B cell (primary cell): ENCODE measurements at regions of chr7 and their contacts with region 1.

Region 1: GRCh38 chr7:47669061-47669891 is 87.4 kb upstream of the TNS3 start:
- DNase-seq: peak; percentile 92
- ATAC-seq: peak; percentile 71
- H3K4me3 ChIP-seq: peak overlapping the region in 3 of 5 experiments; percentile 7 to 23 (median 21)
- H3K4me3 Mint-ChIP-seq: peak overlapping the region; percentile 74
- H3K27ac ChIP-seq: peak overlapping the region; percentile 88 to 90
- H3K27ac Mint-ChIP-seq: peak overlapping the region; percentile 98
- H3K4me1 ChIP-seq: peaks cover 50 to 69% of the 10 kb centered on the region in 2 donors
- H3K4me1 Mint-ChIP-seq: peaks cover 57% of the 10 kb centered on the region
- H3K27me3 ChIP-seq: no peaks in the 10 kb centered on the region
- H3K27me3 Mint-ChIP-seq: no peaks in the 10 kb centered on the region
- CTCF ChIP-seq: no peak

Region 2: DNA sequence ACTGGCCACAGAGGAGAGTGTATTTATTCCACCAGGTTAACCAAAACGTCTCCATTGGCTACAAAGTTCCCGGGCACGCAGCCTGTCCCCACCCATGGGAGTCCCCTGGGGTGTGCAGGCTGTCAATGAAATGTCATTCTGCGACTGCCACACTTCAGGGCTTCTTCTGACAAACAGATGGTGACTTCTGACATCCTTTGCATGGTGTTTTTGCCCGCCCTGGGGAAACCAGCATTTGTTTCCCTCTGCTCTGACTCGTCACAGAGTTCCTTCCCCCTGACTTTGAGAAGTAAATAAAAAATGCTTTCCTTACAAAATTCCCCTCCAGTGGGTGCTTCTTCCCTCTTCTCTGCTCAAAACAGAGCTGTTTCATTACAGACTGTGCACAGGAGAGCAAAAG is 125.6 kb before region 1 on chr7:
- CTCF ChIA-PET with region 1: no interaction called
- POLR2A ChIA-PET with region 1: no interaction called
- intact Hi-C with region 1: loop called (anchors 1 kb)
- DNase-seq: peak; percentile 64
- ATAC-seq: peak; percentile 91
- H3K4me3 ChIP-seq: peak overlapping the region in 1 of 5 experiments; percentile 14
- H3K4me3 Mint-ChIP-seq: peak overlapping the region; percentile 67
- H3K27ac ChIP-seq: peak overlapping the region; percentile 34 to 38
- H3K27ac Mint-ChIP-seq: peak overlapping the region; percentile 88
- H3K4me1 ChIP-seq: peaks cover 18 to 23% of the 10 kb centered on the region in 2 donors
- H3K4me1 Mint-ChIP-seq: peaks cover 54% of the 10 kb centered on the region
- H3K27me3 ChIP-seq: no peaks in the 10 kb centered on the region
- H3K27me3 Mint-ChIP-seq: peaks cover 2% of the 10 kb centered on the region
- CTCF ChIP-seq: no peak

Region 3: DNA sequence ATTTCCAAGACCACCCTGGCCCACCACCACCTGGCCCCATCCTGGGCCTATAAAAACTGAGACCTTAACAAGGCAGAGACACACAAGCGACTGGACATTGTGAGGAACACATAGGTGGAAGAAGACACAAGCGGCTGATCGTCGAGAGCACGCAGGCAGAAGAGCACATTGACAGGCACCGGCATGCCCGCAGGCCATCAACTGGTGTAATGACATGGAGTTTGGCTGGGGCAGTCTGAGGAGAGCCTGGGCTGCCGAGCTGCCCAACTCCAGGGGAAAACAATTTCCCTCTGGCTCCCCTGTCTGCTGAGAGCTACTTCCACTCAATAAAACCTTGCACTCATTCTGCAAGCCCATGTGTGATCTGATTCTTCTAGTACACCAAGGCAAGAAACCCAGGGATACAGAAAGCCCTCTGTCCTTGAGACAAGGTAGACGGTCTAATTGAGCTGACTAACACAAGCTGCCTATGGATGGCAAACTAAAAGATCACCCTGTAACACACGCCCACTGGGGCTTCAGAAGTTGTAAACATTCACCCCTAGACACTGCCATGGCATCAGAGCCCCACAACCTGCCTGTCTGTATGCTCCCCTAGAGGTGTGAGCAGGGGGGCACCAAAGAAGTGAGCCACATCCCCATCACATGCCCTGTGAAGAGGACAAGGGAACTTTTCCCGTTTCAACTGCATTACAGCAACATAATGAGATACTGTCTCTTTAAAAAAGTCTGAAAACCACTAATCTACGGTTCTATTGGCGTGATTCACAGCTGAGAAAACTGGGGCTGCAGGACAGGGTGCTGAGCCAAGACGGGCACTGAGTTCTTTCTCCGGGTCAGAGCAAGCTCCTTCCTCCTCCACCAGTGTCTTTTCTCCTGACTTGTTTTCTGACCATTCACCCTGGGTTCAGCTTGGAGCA is 68.8 kb before region 1 on chr7:
- CTCF ChIA-PET with region 1: interaction called, 6 read pairs
- POLR2A ChIA-PET with region 1: interaction called, 25 read pairs
- intact Hi-C with region 1: loop called (anchors 1 kb)
- DNase-seq: no peak
- ATAC-seq: peak; percentile 61
- H3K4me3 ChIP-seq: peak overlapping the region in 4 of 5 experiments; percentile 7 to 46 (median 13)
- H3K4me3 Mint-ChIP-seq: peak overlapping the region; percentile 74
- H3K27ac ChIP-seq: peak overlapping the region; percentile 57 to 63
- H3K27ac Mint-ChIP-seq: peak overlapping the region; percentile 88
- H3K4me1 ChIP-seq: peaks cover 30 to 38% of the 10 kb centered on the region in 2 donors
- H3K4me1 Mint-ChIP-seq: peaks cover 49% of the 10 kb centered on the region
- H3K27me3 ChIP-seq: no peaks in the 10 kb centered on the region
- H3K27me3 Mint-ChIP-seq: no peaks in the 10 kb centered on the region
- CTCF ChIP-seq: no peak

Region 4: GRCh38 chr7:47714669-47715607 is 45.7 kb after region 1 on chr7:
- CTCF ChIA-PET with region 1: interaction called, 5 read pairs
- POLR2A ChIA-PET with region 1: interaction called, 14 read pairs
- intact Hi-C with region 1: loop called (anchors 2 kb)
- DNase-seq: peak; percentile 63
- ATAC-seq: peak; percentile 81
- H3K4me3 ChIP-seq: no peak overlapping the region
- H3K4me3 Mint-ChIP-seq: peak overlapping the region; percentile 66
- H3K27ac ChIP-seq: peak overlapping the region in 1 of 2 donors; percentile 13
- H3K27ac Mint-ChIP-seq: peak overlapping the region; percentile 84
- H3K4me1 ChIP-seq: peaks cover 16 to 19% of the 10 kb centered on the region in 2 donors
- H3K4me1 Mint-ChIP-seq: peaks cover 31% of the 10 kb centered on the region
- H3K27me3 ChIP-seq: no peaks in the 10 kb centered on the region
- H3K27me3 Mint-ChIP-seq: no peaks in the 10 kb centered on the region
- CTCF ChIP-seq: no peak

Region 5: GRCh38 chr7:47818796-47819606 is 149.7 kb after region 1 on chr7:
- CTCF ChIA-PET with region 1: interaction called, 15 read pairs
- POLR2A ChIA-PET with region 1: interaction called, 4 read pairs
- intact Hi-C with region 1: loop called (anchors 2 kb)
- DNase-seq: peak; percentile 79
- ATAC-seq: peak; percentile 69
- H3K4me3 ChIP-seq: no peak overlapping the region
- H3K4me3 Mint-ChIP-seq: no peak overlapping the region
- H3K27ac ChIP-seq: no peak overlapping the region
- H3K27ac Mint-ChIP-seq: no peak overlapping the region
- H3K4me1 ChIP-seq: peaks cover 0 to under 1% of the 10 kb centered on the region in 2 donors
- H3K4me1 Mint-ChIP-seq: peaks cover 6% of the 10 kb centered on the region
- H3K27me3 ChIP-seq: no peaks in the 10 kb centered on the region
- H3K27me3 Mint-ChIP-seq: no peaks in the 10 kb centered on the region
- CTCF ChIP-seq: peak; percentile 99